Activated B cell treated with CpG ODN at 0.5 μM for 24 hours (primary cell): ENCODE measurements at regions of chr11 and their contacts with region 1.

Region 1: DNA sequence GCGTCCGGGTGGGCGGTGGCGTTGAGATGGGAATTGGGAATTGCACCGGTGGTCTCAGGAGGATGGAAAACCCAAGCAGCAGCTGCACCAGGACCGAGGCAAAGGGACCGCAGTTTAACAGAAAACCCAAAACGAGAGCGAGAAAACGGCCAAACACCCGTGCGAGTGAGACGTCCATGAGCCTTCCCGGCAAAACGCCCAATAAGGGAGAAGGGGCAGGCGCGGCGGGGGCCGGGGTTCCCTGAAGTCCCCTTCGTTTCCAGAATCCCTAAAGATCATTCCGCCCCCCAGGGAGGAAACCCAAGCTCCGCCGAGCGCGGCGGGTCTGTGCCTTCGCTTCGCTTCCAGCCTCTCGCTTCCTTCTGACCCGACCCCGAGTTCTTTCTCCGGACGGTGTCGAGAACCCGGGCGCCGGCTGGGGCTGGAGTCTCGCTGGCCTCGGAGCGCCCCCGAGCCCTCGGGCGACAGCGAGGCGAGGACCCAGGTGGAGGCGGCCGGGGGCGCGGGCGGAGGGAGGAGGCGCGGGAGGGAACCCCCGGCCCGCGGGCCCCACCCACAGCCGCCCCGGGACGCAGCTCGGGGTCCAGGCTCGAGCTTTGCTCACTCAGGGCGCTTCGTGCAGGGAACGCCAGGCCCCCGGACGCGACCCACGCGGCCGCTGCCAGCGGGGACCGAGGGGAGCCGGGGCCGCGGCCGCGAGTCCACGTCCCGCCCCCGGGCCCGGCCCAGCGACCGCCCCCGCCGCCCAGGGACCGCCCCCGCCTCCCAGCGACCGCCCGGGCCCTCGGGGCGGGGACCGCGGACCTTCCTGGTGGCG is at the start of gene PGGHG:
- DNase-seq: peak; percentile 78
- ATAC-seq: peak; percentile 88
- H3K4me3 Mint-ChIP-seq: peak within 1 kb of the TSS; percentile 82
- H3K27ac Mint-ChIP-seq: peak within 1 kb of the TSS; percentile 41
- H3K4me1 Mint-ChIP-seq: peaks cover 17% of the 10 kb centered on the region
- H3K27me3 Mint-ChIP-seq: peaks cover 12% of the 10 kb centered on the region
- CTCF ChIP-seq: no peak
- total RNA-seq, gene PGGHG: 62.3 and 74.1 TPM in 2 replicates

Region 2: GRCh38 chr11:236774-237767 is 51.5 kb before region 1 on chr11 and contains the start of gene PSMD13:
- CTCF ChIA-PET with region 1: no interaction called
- POLR2A ChIA-PET with region 1: no interaction called
- intact Hi-C with region 1: loop called (anchors 5 kb)
- DNase-seq: peak; percentile 85
- ATAC-seq: peak; percentile 78
- H3K4me3 Mint-ChIP-seq: peak within 1 kb of the TSS; percentile 98
- H3K27ac Mint-ChIP-seq: peak within 1 kb of the TSS; percentile 99
- H3K4me1 Mint-ChIP-seq: peaks cover 41% of the 10 kb centered on the region
- H3K27me3 Mint-ChIP-seq: no peaks in the 10 kb centered on the region
- CTCF ChIP-seq: no peak
- total RNA-seq, gene PSMD13: 147 and 149 TPM in 2 replicates

Region 3: GRCh38 chr11:494761-495536 is 206.4 kb after region 1 on chr11:
- CTCF ChIA-PET with region 1: no interaction called
- POLR2A ChIA-PET with region 1: no interaction called
- intact Hi-C with region 1: no loop called
- DNase-seq: no peak
- ATAC-seq: no peak
- H3K4me3 Mint-ChIP-seq: no peak overlapping the region
- H3K27ac Mint-ChIP-seq: no peak overlapping the region
- H3K4me1 Mint-ChIP-seq: peaks cover 4% of the 10 kb centered on the region
- H3K27me3 Mint-ChIP-seq: no peaks in the 10 kb centered on the region
- CTCF ChIP-seq: no peak